Activated CD4-positive, alpha-beta memory T cell treated with anti-CD3 and anti-CD28 coated beads, Interleukin-2, amount 10 ng/mL, durations not matched to agents 7 days and 5 days (primary cell): ENCODE measurements at regions of chr2 and their contacts with region 1.

Region 1: DNA sequence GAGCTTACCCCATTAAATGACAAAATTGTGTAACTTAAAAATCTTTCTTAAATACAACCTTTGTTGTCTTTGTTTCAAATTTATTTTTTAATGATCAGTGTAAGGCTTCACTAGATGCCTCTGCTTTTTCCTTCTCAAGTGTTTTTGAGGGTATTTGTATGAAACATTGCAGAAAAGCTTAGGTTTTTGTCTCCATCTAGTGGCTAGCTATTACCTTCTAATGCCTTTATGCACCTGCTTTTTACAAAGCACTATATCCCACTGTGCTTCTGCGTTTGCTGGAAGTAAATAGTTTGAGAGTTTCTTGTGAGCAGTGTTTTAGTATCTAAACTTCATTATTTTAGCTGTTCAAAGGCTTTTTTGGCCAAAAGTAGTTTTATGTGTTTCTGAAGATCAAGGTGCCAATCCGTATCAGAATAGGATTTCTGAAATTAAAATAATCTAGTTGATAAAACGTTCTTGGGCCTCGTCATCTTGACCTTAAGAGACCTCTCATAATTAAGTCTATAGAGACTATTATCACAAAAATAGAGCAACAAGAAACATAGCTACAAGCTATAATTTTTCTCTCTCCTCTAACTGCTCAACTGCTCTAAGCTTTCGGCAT is 47.0 kb downstream of the IWS1 start:
- DNase-seq: no peak
- H3K4me3 Mint-ChIP-seq: no peak overlapping the region
- H3K27ac Mint-ChIP-seq: no peak overlapping the region
- H3K4me1 Mint-ChIP-seq: no peaks in the 10 kb centered on the region
- H3K27me3 Mint-ChIP-seq: no peaks in the 10 kb centered on the region

Region 2: DNA sequence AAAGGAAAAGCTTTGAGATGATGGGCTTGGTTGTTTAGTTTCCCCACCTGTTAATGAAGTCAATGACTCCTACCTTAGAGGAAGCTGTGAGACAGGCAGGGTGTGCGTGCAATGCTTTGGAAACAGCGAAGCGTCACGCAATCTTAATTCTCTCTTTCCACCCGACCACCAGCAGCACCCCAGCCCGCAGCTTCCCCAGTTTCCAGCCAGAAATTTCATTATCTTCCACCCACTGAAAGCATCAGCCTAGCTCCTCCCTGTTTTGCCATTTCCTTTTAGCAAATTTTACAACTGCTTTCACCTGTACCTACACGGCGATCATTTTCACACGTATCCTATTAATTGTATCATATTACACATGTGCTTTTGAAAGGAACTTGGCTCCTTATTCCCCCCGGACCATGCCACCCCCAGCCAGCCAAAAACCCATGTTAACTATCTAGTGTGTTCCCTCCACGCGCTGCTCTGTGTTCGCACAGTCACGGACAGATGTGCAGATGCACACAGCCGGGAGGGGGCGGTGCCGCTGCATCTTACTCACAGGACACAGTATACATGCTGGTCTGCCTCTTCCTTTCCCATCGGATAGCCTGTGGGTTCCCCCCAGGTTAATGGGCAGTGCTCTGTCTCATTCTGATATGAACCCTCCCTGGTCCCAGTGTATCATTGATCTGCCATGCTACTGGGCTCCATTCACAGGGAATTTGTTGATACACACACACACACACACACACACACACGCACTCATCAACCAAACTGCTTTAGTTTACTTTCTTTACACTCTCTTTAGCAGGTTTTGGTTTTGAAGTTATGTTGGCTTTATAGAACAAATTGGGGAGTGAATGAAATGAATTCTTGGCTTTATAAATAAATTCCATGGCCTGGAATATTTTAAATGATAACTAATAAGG is 281.6 kb before region 1 on chr2:
- CTCF ChIA-PET with region 1: interaction called, 21 read pairs
- POLR2A ChIA-PET with region 1: no interaction called
- DNase-seq: peak; percentile 70
- H3K4me3 Mint-ChIP-seq: peak overlapping the region; percentile 73
- H3K27ac Mint-ChIP-seq: no peak overlapping the region
- H3K4me1 Mint-ChIP-seq: peaks cover 3% of the 10 kb centered on the region
- H3K27me3 Mint-ChIP-seq: no peaks in the 10 kb centered on the region

Region 3: GRCh38 chr2:127293748-127294562 is 185.4 kb before region 1 on chr2 and contains the start of gene ERCC3:
- CTCF ChIA-PET with region 1: interaction called, 20 read pairs
- POLR2A ChIA-PET with region 1: interaction called, 5 read pairs
- DNase-seq: peak; percentile 85
- H3K4me3 Mint-ChIP-seq: peak within 1 kb of the TSS; percentile 99
- H3K27ac Mint-ChIP-seq: peak within 1 kb of the TSS; percentile 89
- H3K4me1 Mint-ChIP-seq: peaks cover 26% of the 10 kb centered on the region
- H3K27me3 Mint-ChIP-seq: no peaks in the 10 kb centered on the region
- total RNA-seq, gene ERCC3: 50.0 to 51.9 TPM

Region 4: DNA sequence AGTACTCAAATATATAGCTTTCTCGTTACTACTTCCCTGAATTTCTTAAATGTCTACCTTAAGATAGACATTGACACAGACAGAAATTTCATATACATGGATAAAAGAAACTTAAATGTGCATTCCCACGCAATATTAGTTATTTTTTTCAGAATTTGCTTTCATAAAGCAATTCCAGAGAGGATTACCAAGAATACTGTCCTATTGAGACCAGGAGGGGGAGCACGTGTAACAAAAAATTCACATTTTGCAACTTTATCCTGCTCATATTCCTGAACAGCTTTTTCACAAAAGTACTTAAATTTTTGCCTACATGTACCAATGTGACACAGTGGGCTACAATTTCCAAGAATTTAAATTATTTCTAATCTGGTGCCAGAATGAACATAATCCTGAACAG is 154.7 kb before region 1 on chr2:
- CTCF ChIA-PET with region 1: interaction called, 20 read pairs
- POLR2A ChIA-PET with region 1: no interaction called
- DNase-seq: no peak
- H3K4me3 Mint-ChIP-seq: no peak overlapping the region
- H3K27ac Mint-ChIP-seq: no peak overlapping the region
- H3K4me1 Mint-ChIP-seq: peaks cover 2% of the 10 kb centered on the region
- H3K27me3 Mint-ChIP-seq: no peaks in the 10 kb centered on the region